MCF 10A (cell line): ENCODE measurements at regions of chr4 and their contacts with region 1.

Region 1: GRCh38 chr4:75916091-75916661 is 13.9 kb upstream of the PPEF2 start:
- DNase-seq: peak; percentile 35
- H3K4me3 Mint-ChIP-seq: no peak overlapping the region
- H3K27ac Mint-ChIP-seq: peak overlapping the region; percentile 31
- H3K4me1 Mint-ChIP-seq: no peaks in the 10 kb centered on the region
- H3K27me3 Mint-ChIP-seq: no peaks in the 10 kb centered on the region
- CTCF ChIP-seq: peak; percentile 79

Region 2: GRCh38 chr4:75940692-75941253 is 24.6 kb after region 1 on chr4 and contains the start of gene NAAA:
- CTCF ChIA-PET with region 1: interaction called, 12 read pairs
- POLR2A ChIA-PET with region 1: no interaction called
- intact Hi-C with region 1: loop called (anchors 2 kb)
- DNase-seq: peak; percentile 65
- H3K4me3 Mint-ChIP-seq: peak within 1 kb of the TSS; percentile 82
- H3K27ac Mint-ChIP-seq: peak within 1 kb of the TSS; percentile 12
- H3K4me1 Mint-ChIP-seq: no peaks in the 10 kb centered on the region
- H3K27me3 Mint-ChIP-seq: no peaks in the 10 kb centered on the region
- CTCF ChIP-seq: peak; percentile 24
- total RNA-seq, gene NAAA: 7.1 and 8.9 TPM in 2 replicates

Region 3: GRCh38 chr4:76067652-76068286 is 151.6 kb after region 1 on chr4:
- CTCF ChIA-PET with region 1: interaction called, 5 read pairs
- POLR2A ChIA-PET with region 1: no interaction called
- intact Hi-C with region 1: loop called (anchors 5 kb)
- DNase-seq: peak; percentile 83
- H3K4me3 Mint-ChIP-seq: no peak overlapping the region
- H3K27ac Mint-ChIP-seq: no peak overlapping the region
- H3K4me1 Mint-ChIP-seq: no peaks in the 10 kb centered on the region
- H3K27me3 Mint-ChIP-seq: no peaks in the 10 kb centered on the region
- CTCF ChIP-seq: peak; percentile 65